BJ (cell line): ENCODE measurements at regions of chr17 and their contacts with region 1.

Region 1: DNA sequence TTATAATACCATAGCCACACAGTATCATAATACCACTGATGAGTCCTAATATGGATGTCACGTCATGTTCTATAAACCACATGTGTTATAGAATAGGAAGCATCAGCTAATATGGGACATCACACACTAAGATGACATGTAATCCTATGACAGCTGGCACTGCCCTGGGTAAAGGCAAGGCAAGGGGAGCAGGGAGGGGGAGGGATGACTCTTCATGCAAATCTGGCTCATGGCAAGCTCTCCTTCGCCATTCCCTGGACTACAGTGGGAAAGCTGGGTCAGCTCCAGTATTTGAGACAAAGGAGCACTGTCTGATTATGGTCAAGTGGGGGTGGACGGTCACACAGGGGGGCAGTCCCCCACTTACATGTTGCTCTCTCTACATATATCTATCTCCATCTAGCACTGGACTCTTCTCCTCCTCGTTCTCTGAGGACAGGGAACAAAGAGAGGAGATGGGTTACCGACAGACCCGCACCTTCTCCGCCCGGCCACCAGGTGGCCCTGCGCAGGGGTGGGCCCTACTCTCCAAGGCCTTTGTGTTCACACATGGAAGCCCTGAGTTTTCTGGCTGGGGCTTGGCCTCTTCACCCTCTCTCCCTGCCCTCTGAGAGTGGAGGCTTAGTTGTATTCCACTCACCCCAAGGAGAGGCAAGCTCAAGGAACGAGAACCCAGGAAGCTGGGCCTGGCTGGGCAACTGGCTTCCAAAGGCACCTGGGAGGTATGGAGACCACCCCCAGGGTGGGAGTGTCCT is 23.4 kb upstream of the MPO start:
- DNase-seq: no peak
- H3K4me3 ChIP-seq: no peak overlapping the region
- H3K27me3 ChIP-seq: no peaks in the 10 kb centered on the region
- CTCF ChIP-seq: peak; percentile 85

Region 2: DNA sequence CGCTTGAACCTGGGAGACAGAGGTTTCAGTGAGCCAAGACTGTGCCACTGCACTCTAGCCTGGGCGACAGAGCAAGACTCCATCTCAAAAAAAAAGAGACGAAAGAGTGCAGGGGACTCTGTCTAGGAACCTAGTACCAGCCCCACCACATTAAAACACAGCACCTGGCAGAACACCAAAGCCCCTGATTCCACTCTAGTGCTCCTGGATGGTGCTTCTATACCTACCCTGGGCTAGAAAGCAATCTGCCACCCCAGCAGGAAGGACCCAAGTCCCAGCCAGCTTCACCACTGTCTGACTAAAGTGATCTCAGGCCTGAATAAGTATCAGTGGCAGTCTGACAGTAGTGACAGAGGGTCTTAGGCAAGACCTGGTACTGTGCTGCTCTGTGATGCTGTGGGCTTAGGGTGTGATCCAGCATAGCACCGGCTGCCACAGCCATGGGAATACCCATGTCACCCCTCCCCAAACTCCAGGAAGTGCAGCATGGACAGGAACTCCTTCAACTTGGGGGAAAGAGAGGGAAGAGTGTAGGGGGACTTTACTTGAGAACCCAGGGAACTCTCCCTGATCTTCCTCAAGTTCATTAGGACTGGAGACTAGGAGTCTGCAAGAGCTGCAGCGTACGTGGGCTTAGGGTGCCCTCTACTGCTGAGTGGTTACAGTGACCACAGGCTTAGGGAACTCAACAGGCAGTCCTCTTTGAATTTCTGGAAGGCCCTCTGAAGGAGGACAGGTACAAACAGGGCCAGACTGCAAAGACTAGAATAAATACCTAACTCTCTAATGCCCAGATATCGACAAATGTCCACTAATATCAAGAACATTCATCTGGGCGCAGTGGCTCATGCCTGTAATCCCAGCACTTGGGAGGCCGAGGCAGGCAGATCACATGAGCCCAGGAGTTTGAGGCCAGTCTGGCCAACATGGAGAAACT is 143.2 kb after region 1 on chr17:
- CTCF ChIA-PET with region 1: interaction called, 22 read pairs
- POLR2A ChIA-PET with region 1: no interaction called
- DNase-seq: peak; percentile 17
- H3K4me3 ChIP-seq: no peak overlapping the region
- H3K27me3 ChIP-seq: no peaks in the 10 kb centered on the region
- CTCF ChIP-seq: peak; percentile 82